Adrenal gland (tissue), 19 donors: ENCODE measurements at regions of chr19 and their contacts with region 1.

Region 1: DNA sequence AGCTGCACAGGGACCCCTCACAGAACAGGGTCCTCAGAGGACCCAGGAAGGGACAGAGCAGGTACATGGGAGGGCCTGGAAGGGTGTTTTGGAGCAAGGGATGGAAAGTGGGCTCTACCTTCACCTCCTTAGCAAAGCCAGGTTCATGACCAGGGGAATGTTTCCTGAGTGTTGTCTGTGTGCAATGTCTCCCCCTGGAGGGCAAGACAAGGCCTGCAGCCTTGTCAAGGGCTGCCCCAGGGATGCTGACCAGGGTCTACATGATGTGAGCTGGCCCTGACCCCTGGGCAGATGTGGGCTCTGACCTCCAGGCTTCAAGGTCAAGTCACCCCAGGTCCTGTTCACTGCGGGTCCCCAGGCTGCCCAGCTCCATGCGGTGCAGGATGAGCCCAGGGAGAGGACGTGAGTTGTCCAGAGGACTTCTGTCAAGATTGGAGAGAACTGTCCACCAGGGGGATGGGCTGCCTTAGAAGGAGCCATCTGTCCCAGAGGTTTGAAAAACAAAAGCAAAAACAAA is 1.0 kb upstream of the CEACAM1 start:
- DNase-seq: peak; percentile 56 to 86 (median 64)
- H3K4me3 ChIP-seq: peak overlapping the region in 1 of 4 donors; percentile 9
- H3K27ac ChIP-seq: peak overlapping the region in 2 of 5 donors; percentile 26 to 61
- H3K4me1 ChIP-seq: peaks cover 0 to 7% of the 10 kb centered on the region in 2 donors
- H3K27me3 ChIP-seq: no peaks in the 10 kb centered on the region
- CTCF ChIP-seq: peak; percentile 79 to 96 (median 92)
- POLR2A ChIP-seq: no peak

Region 2: DNA sequence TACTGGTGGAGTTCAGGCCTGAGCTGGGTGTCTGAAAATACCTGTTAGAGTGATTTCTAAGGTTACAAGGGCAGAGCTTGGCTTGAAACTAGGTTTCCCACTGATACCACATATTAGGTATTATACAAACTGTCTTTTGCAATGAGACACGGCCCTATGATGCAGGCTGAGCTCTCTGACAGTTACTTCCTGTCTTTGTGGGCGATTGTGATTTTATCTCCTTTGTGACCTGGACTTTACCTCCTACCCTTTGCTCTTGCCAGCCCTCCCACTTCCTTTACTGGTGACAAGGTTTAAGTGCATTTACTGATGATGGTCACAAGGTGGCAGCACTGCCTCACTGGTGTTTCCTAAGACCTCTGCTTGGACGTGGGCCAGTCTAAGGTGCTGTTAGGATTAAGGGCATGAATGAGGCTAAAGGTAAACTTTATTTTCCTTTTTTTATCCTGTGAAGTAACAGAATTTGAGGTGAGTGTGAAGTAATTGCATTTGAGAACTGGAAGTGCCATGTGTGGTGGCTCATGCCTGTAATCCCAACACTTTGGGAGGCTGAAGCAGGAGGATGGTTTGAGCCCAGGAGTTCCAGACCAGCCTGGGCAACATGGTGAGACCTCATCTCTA is 78.9 kb before region 1 on chr19:
- intact Hi-C with region 1: loop called (anchors 2 to 5 kb)
- DNase-seq: peak; percentile 76 to 95 (median 88)
- H3K4me3 ChIP-seq: no peak overlapping the region
- H3K27ac ChIP-seq: peak overlapping the region in 2 of 5 donors; percentile 51 to 78
- H3K4me1 ChIP-seq: peaks cover 0 to 7% of the 10 kb centered on the region in 2 donors
- H3K27me3 ChIP-seq: no peaks in the 10 kb centered on the region
- CTCF ChIP-seq: peak; percentile 68 to 98 (median 94)
- POLR2A ChIP-seq: no peak

Region 3: GRCh38 chr19:42568006-42568405 is 38.7 kb after region 1 on chr19:
- intact Hi-C with region 1: no loop called
- DNase-seq: no peak
- H3K4me3 ChIP-seq: no peak overlapping the region
- H3K27ac ChIP-seq: no peak overlapping the region
- H3K4me1 ChIP-seq: peaks cover 5 to 16% of the 10 kb centered on the region in 2 donors
- H3K27me3 ChIP-seq: no peaks in the 10 kb centered on the region
- CTCF ChIP-seq: no peak
- POLR2A ChIP-seq: no peak

Region 4: DNA sequence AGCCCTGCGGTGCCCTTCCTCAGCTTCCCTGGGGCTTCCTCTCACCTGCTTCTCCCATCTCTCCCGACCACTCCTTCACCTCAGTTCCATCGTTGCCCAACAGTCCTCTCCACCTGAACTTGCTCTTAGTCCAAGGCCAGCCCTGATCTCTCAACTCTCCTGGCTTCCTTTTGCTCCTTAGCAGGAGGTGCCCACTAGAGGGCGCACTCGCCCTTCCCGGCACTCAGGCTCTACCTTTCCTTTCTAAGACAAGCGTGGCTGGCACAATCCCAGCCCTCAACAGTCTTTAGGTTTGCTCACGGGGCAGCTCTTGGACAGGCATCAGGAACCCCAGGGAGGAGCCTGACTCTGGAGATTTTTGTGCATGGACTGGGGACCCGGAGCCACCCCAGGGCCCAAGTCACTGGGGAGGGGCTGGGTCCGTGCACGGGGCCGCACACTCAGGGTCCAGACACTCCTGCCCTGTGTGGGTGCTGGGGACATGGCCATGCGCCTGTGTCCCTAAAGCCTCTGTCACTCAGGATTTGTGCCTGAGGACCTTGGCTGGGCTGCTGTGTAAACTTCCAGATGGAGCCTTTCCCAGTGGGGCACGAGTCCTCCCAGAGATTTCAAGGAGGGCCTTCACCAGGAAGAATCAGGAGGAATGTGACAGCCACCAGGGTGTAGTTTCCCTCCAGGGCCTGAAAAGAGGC is 77.5 kb after region 1 on chr19:
- intact Hi-C with region 1: no loop called
- DNase-seq: peak; percentile 43 to 82 (median 69)
- H3K4me3 ChIP-seq: no peak overlapping the region
- H3K27ac ChIP-seq: no peak overlapping the region
- H3K4me1 ChIP-seq: no peaks in the 10 kb centered on the region
- H3K27me3 ChIP-seq: no peaks in the 10 kb centered on the region
- CTCF ChIP-seq: peak; percentile 36 to 64 (median 56)
- POLR2A ChIP-seq: no peak